Activated T-helper 1 cell treated with anti-CD3 and anti-CD28 coated beads, Interleukin-12 subunit alpha, Interleukin-12 subunit beta, Interleukin-2, Interleukin-4 antibody, amounts not matched to agents 30 ng/mL and 10 ng/mL and 1 ng/mL, durations not matched to agents 14 hours and 24 hours and 36 hours (primary cell): ENCODE measurements at regions of chr13 and their contacts with region 1.

Region 1: DNA sequence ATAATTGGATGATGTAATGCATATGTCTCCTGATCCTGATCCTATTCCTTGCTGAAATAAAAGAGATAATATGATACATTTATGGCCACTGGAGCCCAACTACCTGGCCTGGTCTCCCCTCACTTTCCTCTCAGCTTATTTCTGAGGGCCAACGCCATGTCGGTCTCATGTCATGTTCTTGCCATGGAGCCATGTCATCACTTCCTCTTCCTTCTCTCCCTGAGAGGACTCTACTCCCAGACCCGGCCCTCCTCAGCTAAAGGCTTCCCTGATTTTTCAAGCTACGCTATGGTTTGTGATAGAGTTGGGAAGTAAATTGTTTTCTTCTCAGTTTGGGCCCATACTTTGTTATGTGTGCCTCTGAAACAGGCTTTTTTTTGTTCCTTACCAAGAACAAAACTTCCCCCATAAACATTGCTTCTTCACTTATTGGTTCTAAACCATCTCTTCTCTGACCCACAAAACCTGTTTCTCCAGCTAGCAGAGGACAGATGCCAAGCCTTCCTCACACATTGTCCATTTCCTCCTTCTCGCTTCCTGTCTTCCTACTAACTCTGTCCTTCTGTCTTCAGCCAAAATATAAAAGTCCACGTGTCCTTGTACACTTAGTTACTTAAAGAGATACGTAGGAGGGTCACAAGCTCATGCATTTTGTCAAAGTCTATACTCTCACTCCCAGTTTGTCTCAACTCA is 319.9 kb upstream of the DACH1 start:
- DNase-seq: no peak
- H3K4me3 Mint-ChIP-seq: no peak overlapping the region
- H3K27ac Mint-ChIP-seq: no peak overlapping the region
- H3K4me1 Mint-ChIP-seq: no peaks in the 10 kb centered on the region
- H3K27me3 Mint-ChIP-seq: no peaks in the 10 kb centered on the region

Region 2: DNA sequence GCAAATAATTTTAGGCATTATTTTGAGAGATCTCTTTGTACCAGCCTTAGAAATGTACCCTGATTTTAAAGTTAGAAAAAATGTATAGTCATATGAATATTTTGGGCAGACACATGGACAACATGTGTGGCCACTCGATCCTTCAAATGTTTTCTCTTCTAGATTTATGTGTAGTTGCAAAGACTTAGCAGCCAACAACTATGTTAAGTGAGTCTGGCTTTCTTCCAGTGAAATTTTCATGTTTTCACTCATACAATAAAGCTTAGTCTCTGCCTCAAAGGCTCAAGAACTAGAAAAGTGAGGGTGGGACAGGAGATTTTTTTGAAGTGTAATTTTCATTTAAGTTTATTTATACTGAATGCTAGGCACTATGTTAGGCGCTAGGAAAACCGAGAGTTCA is 112.2 kb before region 1 on chr13:
- intact Hi-C with region 1: no loop called
- DNase-seq: no peak
- H3K4me3 Mint-ChIP-seq: no peak overlapping the region
- H3K27ac Mint-ChIP-seq: no peak overlapping the region
- H3K4me1 Mint-ChIP-seq: no peaks in the 10 kb centered on the region
- H3K27me3 Mint-ChIP-seq: no peaks in the 10 kb centered on the region

Region 3: GRCh38 chr13:72093262-72093661 is 93.6 kb before region 1 on chr13:
- intact Hi-C with region 1: no loop called
- DNase-seq: no peak
- H3K4me3 Mint-ChIP-seq: no peak overlapping the region
- H3K27ac Mint-ChIP-seq: no peak overlapping the region
- H3K4me1 Mint-ChIP-seq: no peaks in the 10 kb centered on the region
- H3K27me3 Mint-ChIP-seq: no peaks in the 10 kb centered on the region

Region 4: DNA sequence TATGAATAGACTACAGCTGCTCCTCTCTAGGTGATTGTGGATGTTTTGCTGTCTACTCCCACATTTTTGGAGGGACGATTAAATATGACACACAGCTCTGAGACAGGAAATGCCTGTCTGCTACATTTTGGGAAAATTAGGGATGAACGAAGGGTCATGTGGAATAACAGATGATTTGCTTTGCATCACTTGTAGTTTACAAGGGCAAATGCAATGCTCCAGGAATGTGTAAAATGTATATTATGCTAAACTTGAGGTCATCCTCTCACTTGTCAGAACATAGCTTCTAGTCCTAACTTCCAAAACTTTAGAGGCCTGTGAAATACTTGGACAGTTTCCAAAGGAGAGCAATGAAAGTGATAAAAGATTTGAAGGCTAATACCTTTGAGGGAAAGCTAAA is 35.6 kb before region 1 on chr13:
- intact Hi-C with region 1: no loop called
- DNase-seq: no peak
- H3K4me3 Mint-ChIP-seq: no peak overlapping the region
- H3K27ac Mint-ChIP-seq: no peak overlapping the region
- H3K4me1 Mint-ChIP-seq: no peaks in the 10 kb centered on the region
- H3K27me3 Mint-ChIP-seq: no peaks in the 10 kb centered on the region

Region 5: DNA sequence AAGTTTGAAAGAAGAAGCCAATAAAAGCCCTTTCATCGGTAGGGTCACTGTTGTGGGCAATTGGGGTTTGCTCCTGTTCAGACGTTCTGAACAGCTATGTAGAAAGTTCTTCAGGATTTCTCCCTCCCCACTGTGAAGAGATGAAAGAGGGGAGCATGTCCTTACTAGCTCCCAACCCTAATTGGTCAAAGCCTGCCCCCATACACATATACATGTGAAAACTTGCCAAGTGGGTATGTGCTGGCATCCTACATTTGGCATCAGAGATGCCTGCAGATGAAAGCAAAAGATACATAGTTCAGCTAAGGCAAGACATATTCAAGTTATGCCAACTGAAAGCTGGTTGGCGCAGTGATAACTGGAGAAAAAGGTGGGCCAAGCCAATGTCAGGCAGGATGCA is 43.3 kb after region 1 on chr13:
- intact Hi-C with region 1: loop called (anchors 2 kb)
- DNase-seq: no peak
- H3K4me3 Mint-ChIP-seq: no peak overlapping the region
- H3K27ac Mint-ChIP-seq: no peak overlapping the region
- H3K4me1 Mint-ChIP-seq: no peaks in the 10 kb centered on the region
- H3K27me3 Mint-ChIP-seq: no peaks in the 10 kb centered on the region